SK-N-SH (cell line): ENCODE measurements at regions of chr4 and their contacts with region 1.

Region 1: GRCh38 chr4:6019316-6020263 is 1.4 kb upstream of the C4orf50 start:
- DNase-seq: peak; percentile 72
- H3K4me3 ChIP-seq: no peak overlapping the region; a peak in 1 of 4 replicates
- H3K27ac ChIP-seq: no peak overlapping the region
- H3K4me1 ChIP-seq: no peaks in the 10 kb centered on the region; a peak in 1 of 4 replicates
- H3K27me3 ChIP-seq: no peaks in the 10 kb centered on the region
- CTCF ChIP-seq: peak; percentile 60
- EP300 ChIP-seq: no peak
- RAD21 ChIP-seq: peak; percentile 64

Region 2: DNA sequence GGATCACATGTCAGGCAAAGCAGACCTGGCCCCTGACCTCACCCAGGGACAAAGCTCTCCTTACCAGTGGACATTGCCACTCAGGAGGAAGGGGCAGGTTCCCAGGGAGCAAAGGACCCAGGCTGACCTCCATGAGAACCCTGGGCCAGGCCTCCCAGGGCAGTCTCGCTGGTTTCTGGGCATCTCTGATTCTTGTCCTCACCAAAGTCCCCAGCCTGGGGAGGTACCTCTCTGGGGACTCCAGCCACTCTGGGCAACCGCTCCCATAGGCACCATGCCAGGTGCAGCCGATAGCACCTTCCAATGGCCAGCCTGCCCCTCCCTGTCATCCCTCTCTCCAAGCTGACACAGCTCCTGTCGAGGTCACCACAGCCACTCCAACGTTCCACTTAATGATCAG is 319.1 kb before region 1 on chr4:
- CTCF ChIA-PET with region 1: no interaction called
- POLR2A ChIA-PET with region 1: no interaction called
- DNase-seq: no peak
- H3K4me3 ChIP-seq: no peak overlapping the region
- H3K27ac ChIP-seq: no peak overlapping the region
- H3K4me1 ChIP-seq: no peaks in the 10 kb centered on the region
- H3K27me3 ChIP-seq: no peaks in the 10 kb centered on the region
- CTCF ChIP-seq: no peak
- EP300 ChIP-seq: no peak
- RAD21 ChIP-seq: no peak

Region 3: GRCh38 chr4:6005175-6005574 is 14.4 kb before region 1 on chr4:
- CTCF ChIA-PET with region 1: interaction called, 107 read pairs
- POLR2A ChIA-PET with region 1: no interaction called
- DNase-seq: no peak
- H3K4me3 ChIP-seq: no peak overlapping the region
- H3K27ac ChIP-seq: no peak overlapping the region
- H3K4me1 ChIP-seq: peaks cover 0 to 19% of the 10 kb centered on the region in 2 experiments; a peak in 1 of 4 replicates
- H3K27me3 ChIP-seq: no peaks in the 10 kb centered on the region
- CTCF ChIP-seq: no peak
- EP300 ChIP-seq: no peak
- RAD21 ChIP-seq: no peak

Region 4: DNA sequence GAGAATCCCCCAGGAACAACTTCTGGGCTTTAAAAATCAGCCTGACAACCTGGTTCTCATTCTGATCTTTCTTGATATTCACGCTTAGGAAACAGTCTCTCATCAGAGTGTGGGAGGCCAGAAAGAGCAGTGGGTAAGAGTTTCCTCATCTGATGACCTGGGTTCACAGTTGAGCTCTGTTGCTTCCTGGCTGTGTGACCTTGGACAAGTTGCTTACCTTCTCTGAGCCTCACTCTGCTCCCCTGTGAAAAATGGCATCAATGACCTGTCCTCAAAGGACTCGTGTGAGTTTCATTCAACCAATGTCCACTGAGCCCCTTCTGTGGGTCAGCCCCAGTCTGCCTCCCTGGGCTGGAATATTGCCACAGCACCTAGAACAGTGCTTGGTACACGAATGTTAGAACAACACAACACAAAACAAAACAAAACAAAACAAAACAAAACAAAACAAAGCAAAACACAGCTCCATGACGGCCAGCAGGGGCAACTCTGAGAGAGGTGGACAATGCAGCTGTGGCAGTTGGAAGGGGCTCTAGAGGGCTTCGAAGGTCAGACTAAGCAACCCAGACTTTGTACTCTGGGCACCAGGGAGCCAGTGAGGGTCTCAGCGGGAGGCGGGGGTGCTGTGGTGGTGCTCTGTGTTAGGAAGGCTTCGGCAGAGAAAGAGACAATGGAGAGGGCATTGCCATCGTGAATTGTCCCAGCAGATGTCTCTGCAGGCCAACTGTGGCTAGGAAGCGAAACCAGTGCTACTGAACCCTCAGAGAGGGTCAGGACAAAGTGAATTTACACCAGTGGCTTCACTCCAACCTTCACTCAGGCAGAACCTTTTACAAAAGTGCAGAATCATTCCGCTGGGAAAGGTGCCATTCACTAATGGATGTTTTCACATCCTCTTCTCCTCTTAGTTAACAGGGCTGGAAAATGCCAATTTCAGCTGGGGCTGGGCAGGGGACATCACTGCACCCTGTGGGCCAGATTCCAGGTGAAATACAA is 13.0 kb after region 1 on chr4:
- CTCF ChIA-PET with region 1: interaction called, 38 read pairs
- POLR2A ChIA-PET with region 1: no interaction called
- DNase-seq: no peak
- H3K4me3 ChIP-seq: no peak overlapping the region
- H3K27ac ChIP-seq: peak overlapping the region in 1 of 2 experiments; percentile 47; a peak in 1 of 4 replicates
- H3K4me1 ChIP-seq: peaks cover 0 to 15% of the 10 kb centered on the region in 2 experiments; a peak in 1 of 4 replicates
- H3K27me3 ChIP-seq: no peaks in the 10 kb centered on the region
- CTCF ChIP-seq: no peak
- EP300 ChIP-seq: no peak
- RAD21 ChIP-seq: peak; percentile 54